ENCODE measurements at regions of chr12 and their contacts with region 1.

Region 1: DNA sequence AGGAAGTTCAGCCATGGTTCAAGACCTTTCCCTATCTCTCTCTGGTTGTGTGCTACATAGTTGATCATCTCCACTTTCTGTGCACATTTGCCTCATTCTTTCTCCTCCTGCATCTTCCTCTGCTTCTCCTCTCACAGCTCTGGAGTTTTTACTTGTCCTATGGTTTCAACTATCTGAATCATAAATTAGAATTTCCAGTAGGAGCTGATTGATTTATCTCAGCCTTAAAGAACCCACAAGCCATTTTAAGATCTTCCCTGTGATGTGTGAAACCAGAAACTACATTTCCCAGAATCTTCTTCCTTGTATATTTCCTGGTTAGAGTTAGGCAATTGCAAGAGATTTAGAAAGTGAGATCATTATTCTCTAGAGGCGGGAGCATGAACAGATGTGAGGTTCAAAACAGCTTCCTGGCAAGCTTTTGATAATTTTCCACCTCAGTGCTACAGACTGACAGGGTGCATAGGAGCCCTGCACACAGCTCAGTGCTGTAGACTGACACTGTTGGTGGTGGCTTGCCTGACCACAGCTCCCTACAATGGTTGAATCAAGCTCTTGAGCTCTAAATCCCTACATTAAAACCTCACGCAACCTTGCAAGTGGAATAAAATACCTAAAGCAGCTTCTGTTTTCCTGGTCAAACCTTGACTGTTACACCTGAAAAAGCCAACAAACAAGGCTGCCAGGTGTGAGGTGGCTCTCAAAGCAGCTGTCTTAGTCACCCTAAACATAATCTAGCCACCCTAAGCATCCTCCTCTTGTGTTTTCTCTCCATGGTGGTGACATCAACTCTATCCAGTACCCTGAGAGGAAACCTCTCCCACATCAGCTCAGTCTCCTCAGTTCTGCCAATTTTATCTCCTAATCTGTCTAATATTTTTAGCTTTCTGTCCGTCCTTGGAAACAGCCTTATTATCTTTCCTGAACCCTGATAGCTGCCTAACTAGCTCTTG is 21.5 kb upstream of the IFNG start:
- DNase-seq: no peak
- H3K4me3 ChIP-seq: no peak overlapping the region
- H3K27ac ChIP-seq: no peak overlapping the region
- H3K4me1 ChIP-seq: no peaks in the 10 kb centered on the region
- H3K27me3 ChIP-seq: no peaks in the 10 kb centered on the region
- CTCF ChIP-seq: no peak

Region 2: DNA sequence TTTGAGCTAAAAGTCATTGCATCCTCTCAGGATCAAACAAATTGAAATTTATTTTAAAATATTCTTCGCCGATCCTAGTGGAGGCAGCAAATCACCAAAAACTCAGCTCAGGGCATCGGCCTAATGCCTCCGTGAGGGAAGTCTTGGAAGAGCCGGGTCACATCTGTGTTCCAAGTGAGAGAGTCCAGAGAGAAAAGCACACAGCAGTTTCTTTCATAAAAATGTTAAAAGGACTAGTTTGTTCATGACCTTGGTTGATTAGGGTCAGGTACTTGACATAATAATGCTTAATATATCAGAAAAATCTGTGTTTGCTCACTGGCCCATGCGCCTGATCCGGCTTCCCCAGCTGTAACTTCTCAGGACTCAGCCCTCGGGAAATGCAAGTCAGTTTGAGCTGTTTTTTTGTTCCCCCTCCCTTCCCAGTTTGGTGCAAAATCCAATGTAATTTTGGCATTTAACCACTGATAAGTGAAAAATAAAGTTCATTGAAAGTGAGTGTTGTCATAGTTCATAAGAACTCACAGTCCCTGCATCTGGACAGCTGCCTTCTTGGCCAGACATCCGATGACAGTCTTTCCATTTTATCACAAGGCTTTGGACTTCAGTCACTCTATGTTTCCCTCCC is 750.2 kb before region 1 on chr12:
- CTCF ChIA-PET with region 1: interaction called, 12 read pairs
- POLR2A ChIA-PET with region 1: no interaction called
- intact Hi-C with region 1: no loop called
- DNase-seq: no peak
- H3K4me3 ChIP-seq: no peak overlapping the region
- H3K27ac ChIP-seq: no peak overlapping the region
- H3K4me1 ChIP-seq: peaks cover 40% of the 10 kb centered on the region
- H3K27me3 ChIP-seq: no peaks in the 10 kb centered on the region
- CTCF ChIP-seq: no peak

Region 3: DNA sequence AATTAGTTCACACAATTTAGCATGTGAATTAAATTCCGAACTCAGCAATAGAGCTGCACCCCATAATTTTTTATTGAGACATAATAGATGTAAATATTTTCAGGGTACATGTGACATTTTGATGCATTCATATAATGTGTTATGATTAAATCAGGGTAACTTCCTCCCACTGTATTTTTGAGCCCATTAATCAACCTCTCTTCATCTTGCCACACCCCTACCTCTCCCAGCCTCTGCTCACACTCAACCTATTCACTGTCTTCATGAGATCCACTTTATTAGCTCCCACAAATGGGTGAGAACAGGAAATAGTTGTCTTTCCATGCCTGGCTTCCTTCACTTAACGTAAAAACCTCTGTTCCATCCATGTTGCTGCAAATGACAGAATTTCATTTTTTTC is 29.8 kb after region 1 on chr12:
- CTCF ChIA-PET with region 1: no interaction called
- POLR2A ChIA-PET with region 1: no interaction called
- intact Hi-C with region 1: no loop called
- DNase-seq: no peak
- H3K4me3 ChIP-seq: no peak overlapping the region
- H3K27ac ChIP-seq: no peak overlapping the region
- H3K4me1 ChIP-seq: no peaks in the 10 kb centered on the region
- H3K27me3 ChIP-seq: no peaks in the 10 kb centered on the region
- CTCF ChIP-seq: no peak

Region 4: DNA sequence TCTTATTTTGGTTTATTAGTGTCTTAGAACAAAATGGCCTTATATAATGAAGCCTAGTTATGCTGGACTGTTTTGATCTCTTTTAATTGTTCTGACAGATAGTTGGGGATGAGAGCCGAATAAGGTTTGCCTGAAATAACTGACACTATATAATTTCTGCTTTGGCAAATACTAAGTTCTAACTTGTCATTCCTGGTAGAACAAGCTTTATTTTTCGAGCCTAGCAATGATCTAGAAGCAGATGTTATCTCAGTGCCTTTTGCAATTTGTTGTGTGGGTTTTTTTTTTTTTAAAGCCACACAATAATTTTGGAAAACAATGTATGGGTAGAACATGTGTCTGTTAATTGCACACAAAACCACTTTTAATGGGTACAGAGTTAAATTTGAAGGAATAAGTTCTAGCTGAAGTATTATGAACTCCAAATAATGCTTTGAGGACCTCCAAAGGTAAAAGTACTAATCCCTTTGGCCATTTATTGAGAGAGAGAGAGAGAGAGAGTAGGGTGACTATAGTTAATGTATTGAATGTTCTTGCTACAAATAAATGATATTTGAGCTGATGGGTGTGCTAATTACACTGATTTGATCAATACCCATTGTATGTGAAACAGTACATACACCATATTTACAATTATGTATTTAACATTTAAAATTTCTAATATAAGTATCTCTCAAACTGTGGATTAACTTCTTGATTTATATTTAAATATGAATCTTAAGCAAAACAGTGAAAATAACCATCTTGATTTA is 661.9 kb after region 1 on chr12:
- CTCF ChIA-PET with region 1: no interaction called
- POLR2A ChIA-PET with region 1: interaction called, 10 read pairs
- intact Hi-C with region 1: no loop called
- DNase-seq: no peak
- H3K4me3 ChIP-seq: no peak overlapping the region
- H3K27ac ChIP-seq: no peak overlapping the region
- H3K4me1 ChIP-seq: no peaks in the 10 kb centered on the region
- H3K27me3 ChIP-seq: no peaks in the 10 kb centered on the region
- CTCF ChIP-seq: no peak